ENCODE measurements at regions of chr1 and their contacts with region 1.

Region 1: DNA sequence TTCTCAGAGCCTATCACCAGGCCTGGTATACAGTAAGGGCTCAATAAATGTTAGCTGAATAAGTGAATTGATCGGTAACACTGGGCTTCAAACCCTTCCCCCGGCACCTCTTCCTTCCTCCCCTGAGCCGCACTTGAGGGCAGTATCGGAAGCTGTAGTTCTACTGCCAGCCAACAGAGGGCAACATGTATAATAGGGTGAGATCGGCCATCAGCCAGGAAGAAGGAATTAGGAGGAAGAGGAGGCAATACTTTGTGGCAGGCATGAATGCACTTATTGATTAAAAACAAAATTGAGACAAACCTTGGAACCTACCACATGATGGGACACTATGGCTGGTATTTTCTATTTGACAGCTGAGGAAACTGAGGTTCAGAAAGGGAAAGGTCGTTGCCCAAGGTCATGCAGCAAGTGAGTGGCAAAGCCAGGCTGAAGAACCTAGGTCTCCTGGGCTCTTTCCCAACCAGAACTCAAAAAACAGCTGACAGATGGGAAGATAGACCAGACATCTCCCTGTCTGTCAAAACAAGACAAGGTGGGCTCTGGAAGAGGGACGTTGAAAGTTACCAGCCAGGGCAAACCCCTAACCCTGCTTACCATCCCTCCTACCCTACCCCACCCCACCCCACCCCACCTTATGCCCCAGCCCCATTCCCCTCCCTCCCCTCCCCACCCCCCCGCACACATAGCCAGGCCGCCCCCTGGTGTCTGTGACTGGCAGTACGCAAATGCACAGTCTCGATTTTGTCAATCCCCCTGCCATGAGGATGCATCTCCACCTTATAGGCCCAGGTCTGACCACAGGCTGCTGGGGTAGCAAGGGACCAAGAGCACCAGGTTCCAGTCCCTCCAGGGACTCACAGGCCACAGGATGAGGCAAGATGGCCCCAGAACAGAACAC is 107.3 kb upstream of the RUNX3 start:
- DNase-seq: peak; percentile 77
- H3K4me3 Mint-ChIP-seq: no peak overlapping the region
- H3K27ac Mint-ChIP-seq: peak overlapping the region; percentile 64
- H3K4me1 Mint-ChIP-seq: peaks cover 51% of the 10 kb centered on the region
- H3K27me3 Mint-ChIP-seq: peaks cover 2% of the 10 kb centered on the region

Region 2: DNA sequence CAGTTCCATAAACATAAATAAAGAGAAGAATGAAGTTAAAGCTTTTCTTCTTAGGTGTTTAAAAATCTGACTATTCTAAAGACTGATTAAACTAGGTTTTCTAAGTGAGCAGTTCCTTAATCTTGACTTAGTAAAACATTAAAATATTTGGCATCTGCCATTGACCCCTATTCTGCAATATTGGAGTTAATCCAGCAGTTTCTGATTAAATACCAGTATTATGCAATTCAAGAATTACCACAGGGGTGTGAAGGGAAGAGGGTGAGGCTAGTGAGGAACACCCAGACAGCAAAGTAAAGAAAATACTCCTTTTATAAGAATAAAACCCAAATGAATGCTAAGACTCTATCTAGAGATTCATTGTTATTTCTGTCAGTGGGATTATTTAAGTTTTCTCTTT is 251.2 kb before region 1 on chr1:
- CTCF ChIA-PET with region 1: no interaction called
- POLR2A ChIA-PET with region 1: no interaction called
- DNase-seq: no peak
- H3K4me3 Mint-ChIP-seq: no peak overlapping the region
- H3K27ac Mint-ChIP-seq: no peak overlapping the region
- H3K4me1 Mint-ChIP-seq: no peaks in the 10 kb centered on the region
- H3K27me3 Mint-ChIP-seq: no peaks in the 10 kb centered on the region

Region 3: DNA sequence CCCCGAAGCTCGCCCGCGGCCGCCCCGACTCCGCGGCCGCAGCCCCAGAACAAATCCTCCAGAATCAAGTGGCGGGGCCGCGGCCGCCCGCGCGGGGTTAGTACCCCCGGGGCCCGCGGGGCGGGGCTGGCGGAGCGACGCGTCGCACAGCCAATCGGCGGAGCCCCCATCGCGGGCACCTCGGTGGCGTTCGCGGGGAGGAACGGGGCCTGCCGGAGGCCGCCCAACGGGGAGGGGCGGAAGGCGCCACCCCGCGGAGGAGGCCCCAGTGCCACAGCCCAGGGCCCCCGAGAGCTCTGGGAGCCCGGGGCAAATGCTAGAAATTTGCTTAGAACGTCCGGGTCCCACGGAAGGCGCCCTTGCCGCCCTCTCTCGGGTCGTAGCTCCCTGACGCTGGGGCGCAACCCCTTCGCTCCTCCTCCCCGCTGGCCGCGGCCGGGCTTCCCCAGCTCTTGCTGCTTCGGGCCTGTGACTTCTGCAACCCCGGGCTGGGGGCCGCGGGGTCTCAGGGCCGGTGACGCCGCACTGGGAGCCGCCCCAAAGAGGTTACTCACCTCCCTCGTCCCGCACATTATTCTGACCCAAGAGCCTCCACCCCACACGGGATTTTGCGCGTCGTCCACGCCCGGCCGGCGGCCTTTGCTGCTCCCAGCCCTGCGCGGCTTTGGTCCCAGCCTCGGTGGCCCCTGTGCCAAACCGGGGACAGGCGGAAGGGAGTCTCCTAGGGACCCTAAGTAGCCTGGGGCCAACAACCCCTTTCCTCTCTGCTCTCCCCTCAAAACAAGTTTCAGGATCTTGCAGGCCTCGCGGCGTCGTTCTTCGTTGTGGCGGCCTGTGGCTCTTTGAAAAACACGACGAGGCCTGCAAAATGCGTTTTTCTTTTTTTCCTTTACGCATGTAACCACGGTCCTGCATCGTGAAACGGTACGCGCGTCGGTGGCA is 106.9 kb before region 1 on chr1 and contains the start of gene RUNX3:
- CTCF ChIA-PET with region 1: interaction called, 27 read pairs
- POLR2A ChIA-PET with region 1: no interaction called
- DNase-seq: peak; percentile 92
- H3K4me3 Mint-ChIP-seq: peak within 1 kb of the TSS; percentile 94
- H3K27ac Mint-ChIP-seq: peak within 1 kb of the TSS; percentile 85
- H3K4me1 Mint-ChIP-seq: peaks cover 67% of the 10 kb centered on the region
- H3K27me3 Mint-ChIP-seq: no peaks in the 10 kb centered on the region
- total RNA-seq, gene RUNX3: 108 to 125 TPM

Region 4: DNA sequence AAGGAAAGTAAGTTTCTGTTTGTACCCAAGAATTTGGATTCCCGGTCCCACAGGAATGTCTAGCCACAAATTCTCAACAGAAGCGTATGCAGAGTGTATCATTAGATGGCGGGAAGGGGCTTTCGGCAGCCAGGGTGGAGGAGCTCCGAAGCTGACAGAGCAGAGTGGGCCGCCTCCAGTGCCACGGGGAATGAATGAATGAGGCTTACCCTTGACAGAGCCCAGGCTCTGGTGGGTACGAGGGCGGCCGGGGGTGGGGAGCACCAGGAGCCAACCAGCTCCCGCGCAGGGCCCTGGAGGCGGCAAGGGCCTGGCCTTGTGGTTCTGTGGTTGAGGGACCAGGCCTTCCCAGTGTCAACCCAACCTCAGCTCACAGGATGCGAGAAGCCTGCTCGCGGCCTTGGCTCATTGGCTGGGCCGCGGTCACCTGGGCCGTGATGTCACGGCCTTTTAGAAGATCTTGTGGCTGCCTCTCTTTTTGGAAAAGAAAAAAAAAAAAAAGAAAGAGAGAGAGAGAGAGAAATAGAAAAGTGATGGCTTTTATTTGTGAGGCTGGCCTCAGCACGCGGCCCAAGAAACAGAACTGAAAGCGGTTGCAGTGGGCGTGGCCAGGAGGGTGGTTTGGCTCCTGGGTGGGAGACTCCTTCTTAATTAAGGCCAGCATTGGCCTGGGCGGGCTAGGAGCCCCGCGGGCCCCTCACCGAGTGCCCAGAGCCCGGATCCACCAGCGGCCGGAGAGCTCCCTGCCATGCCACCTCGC is 72.4 kb before region 1 on chr1:
- CTCF ChIA-PET with region 1: interaction called, 27 read pairs
- POLR2A ChIA-PET with region 1: interaction called, 3 read pairs
- DNase-seq: peak; percentile 98
- H3K4me3 Mint-ChIP-seq: peak overlapping the region; percentile 92
- H3K27ac Mint-ChIP-seq: peak overlapping the region; percentile 92
- H3K4me1 Mint-ChIP-seq: peaks cover 65% of the 10 kb centered on the region
- H3K27me3 Mint-ChIP-seq: no peaks in the 10 kb centered on the region

Region 5: DNA sequence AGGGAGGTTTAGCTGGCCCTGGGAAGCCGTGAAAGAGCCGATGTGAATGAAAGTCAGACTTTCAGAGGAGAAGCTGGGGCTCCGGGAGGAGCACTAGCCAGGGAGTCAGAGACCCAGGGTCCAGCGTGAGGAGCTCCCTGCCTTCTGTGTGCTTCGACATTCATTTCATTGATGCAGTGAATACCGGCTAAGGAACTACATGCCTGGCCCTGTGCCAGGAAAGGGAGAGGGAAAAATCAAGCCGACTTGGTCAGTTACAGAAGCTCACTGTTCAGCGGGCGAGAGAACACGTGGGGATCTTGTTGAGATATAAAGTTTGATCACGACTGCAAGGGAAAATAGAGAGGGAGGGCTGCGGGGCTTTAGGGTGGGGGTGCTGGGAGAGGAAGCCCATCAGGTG is 30.7 kb before region 1 on chr1:
- CTCF ChIA-PET with region 1: interaction called, 10 read pairs
- POLR2A ChIA-PET with region 1: no interaction called
- DNase-seq: no peak
- H3K4me3 Mint-ChIP-seq: no peak overlapping the region
- H3K27ac Mint-ChIP-seq: peak overlapping the region; percentile 78
- H3K4me1 Mint-ChIP-seq: peaks cover 81% of the 10 kb centered on the region
- H3K27me3 Mint-ChIP-seq: peaks cover 1% of the 10 kb centered on the region

Region 6: DNA sequence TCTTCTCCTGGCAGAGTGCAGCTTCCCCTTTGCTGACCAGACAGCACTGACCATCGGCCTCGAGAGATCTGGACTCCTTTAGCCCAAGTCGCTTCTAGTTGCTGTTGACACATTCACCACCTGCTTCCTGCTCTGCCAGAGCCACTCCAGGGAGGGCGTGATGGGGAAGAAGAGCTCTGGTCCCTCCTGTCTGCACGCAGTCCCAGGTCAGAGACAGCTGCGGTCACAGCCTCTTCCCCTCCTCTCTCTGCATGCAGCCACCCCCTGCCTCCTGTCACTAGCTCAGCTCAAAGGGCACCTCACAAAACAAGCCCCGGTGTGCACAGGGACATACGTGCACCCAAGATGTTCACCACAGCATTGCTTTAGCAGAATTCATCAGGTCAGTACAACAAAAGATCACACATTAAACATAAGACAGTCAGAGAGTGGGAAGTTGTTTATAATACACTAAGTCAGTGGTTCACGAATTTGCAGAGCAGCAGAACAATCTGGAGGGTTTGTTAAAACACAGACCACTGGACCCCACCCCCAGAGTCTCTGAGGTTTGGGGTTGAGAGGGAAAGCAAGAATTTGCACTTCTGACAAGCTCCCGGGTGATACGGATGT is 62.0 kb after region 1 on chr1:
- CTCF ChIA-PET with region 1: interaction called, 14 read pairs
- POLR2A ChIA-PET with region 1: no interaction called
- DNase-seq: peak; percentile 61
- H3K4me3 Mint-ChIP-seq: peak overlapping the region; percentile 52
- H3K27ac Mint-ChIP-seq: peak overlapping the region; percentile 89
- H3K4me1 Mint-ChIP-seq: peaks cover 75% of the 10 kb centered on the region
- H3K27me3 Mint-ChIP-seq: peaks cover 9% of the 10 kb centered on the region